ENCODE measurements at regions of chr1 and their contacts with region 1.

Region 1: DNA sequence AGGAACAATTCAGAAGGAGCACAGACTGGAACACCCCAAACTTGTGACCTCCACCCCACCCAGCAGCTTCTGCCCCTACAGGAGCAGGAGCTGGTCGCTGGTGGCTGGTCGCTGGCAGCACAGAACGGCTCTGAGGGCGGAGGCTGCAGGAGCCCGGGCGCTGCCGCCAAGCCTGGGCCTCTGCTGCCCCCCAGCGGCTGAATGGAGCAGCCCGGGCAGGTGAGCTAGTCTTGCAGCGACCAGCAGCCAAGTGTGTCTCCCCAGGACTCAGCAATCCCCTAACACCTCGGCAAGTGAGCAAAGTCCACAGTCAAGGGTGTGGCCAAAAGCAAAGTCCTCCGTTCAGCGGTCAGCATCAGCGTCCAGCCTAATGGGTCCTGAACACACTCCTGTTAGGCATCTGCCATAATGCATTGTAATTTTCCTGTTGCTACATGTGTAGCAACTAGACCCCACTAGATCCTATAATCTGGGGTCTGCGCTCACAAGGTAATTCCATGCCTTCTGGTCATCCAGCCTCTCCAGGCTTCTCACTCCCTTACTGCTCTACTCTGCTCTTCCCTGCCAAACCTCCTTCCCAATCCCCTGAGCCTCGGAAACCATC is 12.1 kb upstream of the GJB5 start:
- DNase-seq: peak; percentile 90
- CTCF ChIP-seq: peak; percentile 97

Region 2: DNA sequence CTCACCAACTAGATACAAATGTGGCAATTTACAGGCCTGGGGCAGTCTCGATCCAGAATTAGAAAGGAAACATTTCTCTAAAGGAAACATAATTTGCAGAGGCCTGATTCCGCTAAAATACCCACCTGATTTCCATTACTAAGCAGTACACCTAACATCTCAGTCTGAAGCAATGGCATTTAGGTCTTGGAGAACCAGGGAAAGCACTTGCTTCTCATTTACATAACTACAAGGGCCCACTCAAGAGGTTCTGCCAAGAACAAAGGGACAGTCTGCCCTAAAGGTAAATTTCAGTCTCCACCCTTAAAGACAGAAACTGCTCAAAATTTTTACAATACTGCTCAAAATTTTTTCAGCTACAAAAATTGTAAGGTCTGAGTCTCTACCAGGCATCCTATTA is 111.6 kb before region 1 on chr1:
- CTCF ChIA-PET with region 1: no interaction called
- POLR2A ChIA-PET with region 1: no interaction called
- DNase-seq: no peak
- CTCF ChIP-seq: no peak

Region 3: GRCh38 chr1:34721646-34722355 is 21.0 kb before region 1 on chr1:
- CTCF ChIA-PET with region 1: interaction called, 31 read pairs
- POLR2A ChIA-PET with region 1: no interaction called
- DNase-seq: no peak
- CTCF ChIP-seq: no peak

Region 4: DNA sequence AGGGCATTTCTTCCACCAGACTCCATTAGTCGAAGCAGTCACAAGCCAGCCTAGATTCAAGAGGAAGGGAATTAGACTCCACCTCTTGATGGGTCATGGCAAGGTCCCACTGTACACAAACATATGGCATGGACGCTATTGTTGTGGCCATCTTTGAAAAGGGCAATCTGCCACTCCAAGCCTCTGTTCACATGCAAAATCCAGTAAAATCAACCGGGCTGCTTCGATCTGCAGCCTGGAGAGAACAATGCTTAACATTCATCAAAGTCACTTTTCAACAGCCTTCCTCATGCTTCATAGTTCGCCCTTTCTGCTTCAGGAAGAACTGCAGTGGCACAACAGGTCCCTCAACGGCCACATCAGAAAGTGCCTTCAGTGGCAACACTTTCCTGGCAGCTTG is 15.9 kb before region 1 on chr1:
- CTCF ChIA-PET with region 1: interaction called, 31 read pairs
- POLR2A ChIA-PET with region 1: no interaction called
- DNase-seq: no peak
- CTCF ChIP-seq: no peak

Region 5: GRCh38 chr1:34754964-34755637 is 12.3 kb after region 1 on chr1 and contains the start of gene GJB5:
- CTCF ChIA-PET with region 1: interaction called, 31 read pairs
- POLR2A ChIA-PET with region 1: no interaction called
- DNase-seq: no peak
- CTCF ChIP-seq: no peak

Region 6: DNA sequence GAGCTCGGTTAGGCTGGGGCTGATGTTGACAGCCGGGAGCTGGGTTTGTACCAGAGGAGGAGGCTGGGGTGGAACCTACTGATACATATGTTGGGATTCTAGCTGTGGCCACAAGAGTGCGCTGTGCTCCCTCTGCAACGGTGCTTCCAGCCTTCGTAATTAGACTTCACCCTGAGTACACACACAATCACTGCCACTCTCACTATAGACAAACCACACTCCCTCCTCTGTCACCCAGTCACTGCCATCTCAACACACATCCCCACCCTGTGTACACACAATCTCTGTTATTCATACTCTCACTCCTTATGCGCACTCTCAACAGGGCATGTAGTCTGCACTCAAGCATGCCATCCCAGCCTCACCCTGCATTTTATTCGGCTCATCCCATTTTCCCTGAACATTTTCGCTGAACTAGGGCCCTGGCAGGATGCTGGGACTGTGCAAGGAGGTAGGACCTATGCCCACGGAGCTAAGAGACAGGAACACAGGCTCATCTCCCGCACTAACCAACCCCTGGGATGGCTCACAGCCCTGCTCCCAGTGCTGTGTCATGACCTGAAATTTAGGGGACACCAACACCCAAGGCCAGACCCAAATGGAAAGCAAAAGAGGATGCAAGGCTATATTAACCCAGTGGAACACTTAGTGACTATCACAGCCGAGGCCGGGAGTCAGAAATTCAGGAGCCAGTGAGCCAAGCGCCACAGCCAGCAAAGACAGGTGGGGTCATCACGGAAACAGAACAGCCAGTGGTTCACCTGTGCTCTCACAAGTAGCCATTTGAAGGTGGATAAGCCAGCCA is 44.0 kb after region 1 on chr1:
- CTCF ChIA-PET with region 1: no interaction called
- POLR2A ChIA-PET with region 1: no interaction called
- DNase-seq: peak; percentile 81
- CTCF ChIP-seq: peak; percentile 73